SK-N-SH (cell line): ENCODE measurements at regions of chr5 and their contacts with region 1.

Region 1: GRCh38 chr5:71589903-71590302 is 2.8 kb downstream of the MCCC2 start:
- DNase-seq: no peak
- H3K4me3 ChIP-seq: no peak overlapping the region
- H3K27ac ChIP-seq: no peak overlapping the region
- H3K4me1 ChIP-seq: peaks cover 6 to 8% of the 10 kb centered on the region in 2 experiments; a peak in 2 of 4 replicates
- H3K27me3 ChIP-seq: no peaks in the 10 kb centered on the region
- CTCF ChIP-seq: no peak
- EP300 ChIP-seq: no peak
- RAD21 ChIP-seq: no peak

Region 2: DNA sequence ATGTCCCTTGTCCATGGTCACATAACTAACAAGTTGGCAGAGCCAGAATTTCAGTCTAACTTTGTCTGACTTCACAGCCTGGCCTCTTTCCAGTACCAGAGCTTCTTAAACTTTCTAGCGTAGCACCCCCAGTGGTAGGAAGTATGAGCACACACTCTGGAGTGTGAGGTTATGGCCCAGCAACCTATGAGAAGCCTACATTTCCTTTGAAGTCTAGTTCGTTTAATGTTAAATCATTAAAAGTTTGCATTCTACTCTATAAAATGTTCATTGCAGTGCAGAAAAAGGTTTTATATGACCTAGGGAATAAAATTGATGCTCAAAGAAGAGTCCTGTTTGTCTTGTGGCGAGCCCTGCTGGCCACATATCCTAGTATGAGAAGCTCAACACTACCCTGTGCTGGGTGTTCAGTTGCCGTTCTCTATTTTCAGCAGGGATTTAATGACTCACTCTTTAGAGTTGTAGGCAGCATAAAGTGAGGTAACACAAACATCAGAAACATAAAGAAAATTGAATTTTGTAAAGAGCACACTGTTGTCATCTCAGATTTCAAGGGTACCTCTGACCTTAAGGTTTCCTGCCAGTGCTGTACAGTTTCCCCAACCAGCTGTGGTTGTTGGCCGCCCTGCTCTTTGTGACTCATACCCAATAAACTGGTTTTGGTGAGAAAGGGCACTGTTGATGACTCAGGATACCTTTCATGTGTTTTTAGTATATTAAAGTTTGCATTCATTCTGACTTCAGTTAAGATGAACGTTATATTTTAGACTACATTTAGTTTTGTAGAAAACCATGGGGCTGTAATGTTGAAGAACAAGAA is 11.5 kb after region 1 on chr5:
- CTCF ChIA-PET with region 1: interaction called, 10 read pairs
- POLR2A ChIA-PET with region 1: no interaction called
- DNase-seq: peak; percentile 65
- H3K4me3 ChIP-seq: peak overlapping the region in 1 of 2 experiments; percentile 10; a peak in 1 of 4 replicates
- H3K27ac ChIP-seq: peak overlapping the region; percentile 20 to 90; a peak in 3 of 4 replicates
- H3K4me1 ChIP-seq: peaks cover 3 to 8% of the 10 kb centered on the region in 2 experiments
- H3K27me3 ChIP-seq: no peaks in the 10 kb centered on the region
- CTCF ChIP-seq: peak; percentile 84
- EP300 ChIP-seq: peak in 1 of 2 experiments; percentile 66; a peak in 2 of 4 replicates
- RAD21 ChIP-seq: peak; percentile 42; the same call in 1 of the 2 replicates